ENCODE measurements at regions of chr4 and their contacts with region 1.

Region 1: GRCh38 chr4:103091601-103092223 is 7.9 kb downstream of the BDH2 start:
- DNase-seq: peak; percentile 66
- H3K4me3 ChIP-seq: no peak overlapping the region
- H3K27ac ChIP-seq: no peak overlapping the region
- H3K4me1 ChIP-seq: no peaks in the 10 kb centered on the region
- H3K27me3 ChIP-seq: no peaks in the 10 kb centered on the region
- CTCF ChIP-seq: peak; percentile 49 to 56
- POLR2A ChIP-seq: no peak

Region 2: DNA sequence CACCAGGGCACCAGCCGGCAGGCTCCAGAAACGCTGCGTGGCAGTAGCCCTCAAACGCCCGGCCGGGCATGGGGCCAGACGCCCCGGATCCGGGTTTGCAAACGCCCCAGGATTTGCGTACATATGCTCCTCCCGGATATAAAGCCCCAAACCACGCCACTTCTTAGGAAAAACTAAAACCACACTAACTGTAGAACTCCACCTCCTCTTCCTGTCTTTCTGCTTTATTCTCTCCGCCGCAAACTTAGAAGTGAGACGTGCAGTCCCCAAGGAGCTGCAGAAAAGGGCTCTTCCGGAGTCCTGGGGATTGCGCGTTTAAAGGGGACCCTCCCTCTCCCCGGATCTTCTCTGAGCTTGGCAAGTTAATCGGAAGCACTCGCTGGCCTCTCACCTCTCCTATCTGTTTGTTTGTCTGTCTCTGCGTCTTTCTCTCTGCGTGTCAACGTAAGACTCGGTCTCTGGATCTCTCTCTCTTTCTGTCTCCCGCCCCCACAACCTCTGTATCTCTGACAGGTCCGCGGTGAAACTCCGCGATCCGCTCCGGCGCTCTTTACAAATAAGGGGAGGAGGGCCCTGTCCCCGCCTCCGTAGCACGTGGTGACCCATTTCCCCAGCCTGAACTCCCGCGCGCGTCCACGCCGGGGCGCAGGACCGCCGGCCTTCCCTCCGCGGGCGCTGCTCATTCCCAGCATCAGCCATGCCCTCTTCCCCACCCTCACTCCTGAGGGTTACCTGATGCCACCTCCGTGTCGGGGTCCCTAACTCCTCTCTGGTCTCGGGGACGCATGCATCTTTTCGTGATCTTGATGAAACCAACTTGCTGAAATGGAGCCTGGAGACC is 746.5 kb before region 1 on chr4 and contains the start of gene SLC39A8:
- CTCF ChIA-PET with region 1: no interaction called
- POLR2A ChIA-PET with region 1: no interaction called
- dilution Hi-C with region 1: no loop called
- intact Hi-C with region 1: loop called (anchors 2 kb)
- DNase-seq: peak; percentile 79
- H3K4me3 ChIP-seq: peak within 1 kb of the TSS; percentile 39 to 90 (median 89)
- H3K27ac ChIP-seq: no peak within 1 kb of the TSS
- H3K4me1 ChIP-seq: peaks cover 19% of the 10 kb centered on the region
- H3K27me3 ChIP-seq: peaks cover 2 to 5% of the 10 kb centered on the region in 2 experiments
- CTCF ChIP-seq: peak; percentile 67 to 84
- POLR2A ChIP-seq: peak; percentile 42
- total RNA-seq, gene SLC39A8: 6.0 and 6.7 TPM in 2 replicates

Region 3: GRCh38 chr4:102449751-102450352 is 641.9 kb before region 1 on chr4:
- CTCF ChIA-PET with region 1: interaction called, 6 read pairs
- POLR2A ChIA-PET with region 1: no interaction called
- dilution Hi-C with region 1: no loop called
- intact Hi-C with region 1: loop called (anchors 1 kb)
- DNase-seq: peak; percentile 74
- H3K4me3 ChIP-seq: no peak overlapping the region
- H3K27ac ChIP-seq: no peak overlapping the region
- H3K4me1 ChIP-seq: no peaks in the 10 kb centered on the region
- H3K27me3 ChIP-seq: no peaks in the 10 kb centered on the region
- CTCF ChIP-seq: peak; percentile 40 to 58
- POLR2A ChIP-seq: no peak

Region 4: GRCh38 chr4:102881343-102881742 is 210.4 kb before region 1 on chr4:
- CTCF ChIA-PET with region 1: no interaction called
- POLR2A ChIA-PET with region 1: no interaction called
- dilution Hi-C with region 1: no loop called
- intact Hi-C with region 1: no loop called
- DNase-seq: no peak
- H3K4me3 ChIP-seq: no peak overlapping the region
- H3K27ac ChIP-seq: no peak overlapping the region
- H3K4me1 ChIP-seq: no peaks in the 10 kb centered on the region
- H3K27me3 ChIP-seq: no peaks in the 10 kb centered on the region
- CTCF ChIP-seq: no peak
- POLR2A ChIP-seq: no peak

Region 5: DNA sequence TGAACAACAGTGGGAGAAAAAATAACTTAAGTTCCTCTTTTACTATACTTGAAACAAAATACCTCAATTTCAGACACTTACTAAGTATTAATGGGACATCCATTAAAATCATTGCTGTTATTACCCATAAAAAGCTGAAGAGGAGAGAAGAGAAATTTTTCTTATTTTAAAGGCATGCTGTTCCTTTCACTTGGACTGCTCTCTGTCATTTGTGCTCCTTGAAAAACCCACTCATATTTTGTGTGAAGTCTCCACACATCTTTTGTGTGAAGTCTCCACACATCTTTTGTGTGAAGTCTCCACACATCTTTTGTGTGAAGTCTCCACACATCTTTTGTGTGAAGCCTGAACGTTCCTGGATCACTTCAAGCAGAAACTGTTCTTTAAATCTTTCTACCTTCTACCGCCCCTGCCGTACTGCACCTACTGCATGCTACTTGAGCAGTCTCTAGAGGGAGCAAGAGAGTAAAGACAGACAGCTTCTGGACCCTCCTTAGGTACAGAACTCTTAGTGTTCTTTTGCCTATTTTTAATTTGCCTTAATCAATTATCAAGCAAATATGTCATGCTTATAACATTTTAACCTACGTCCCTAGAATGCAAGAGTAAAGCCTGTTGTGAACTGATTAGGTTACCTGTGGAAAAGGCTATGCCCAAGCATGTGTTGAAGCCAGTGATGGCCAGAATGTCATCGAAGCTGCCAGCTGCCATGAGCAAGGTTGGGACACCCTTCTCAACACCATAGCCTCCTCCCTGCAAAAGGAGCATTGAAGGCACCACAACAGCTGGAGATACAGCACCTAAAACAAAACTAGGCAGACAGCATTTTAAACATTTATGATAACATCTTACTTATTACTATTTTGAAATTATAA is 45.1 kb before region 1 on chr4:
- CTCF ChIA-PET with region 1: interaction called, 4 read pairs
- POLR2A ChIA-PET with region 1: interaction called, 4 read pairs
- dilution Hi-C with region 1: no loop called
- intact Hi-C with region 1: loop called (anchors 5 kb)
- DNase-seq: peak; percentile 44
- H3K4me3 ChIP-seq: no peak overlapping the region
- H3K27ac ChIP-seq: no peak overlapping the region
- H3K4me1 ChIP-seq: no peaks in the 10 kb centered on the region
- H3K27me3 ChIP-seq: no peaks in the 10 kb centered on the region
- CTCF ChIP-seq: peak; percentile 57 to 67
- POLR2A ChIP-seq: no peak

Region 6: GRCh38 chr4:103289186-103289585 is 197.5 kb after region 1 on chr4:
- CTCF ChIA-PET with region 1: no interaction called
- POLR2A ChIA-PET with region 1: no interaction called
- dilution Hi-C with region 1: no loop called
- intact Hi-C with region 1: no loop called
- DNase-seq: no peak
- H3K4me3 ChIP-seq: no peak overlapping the region
- H3K27ac ChIP-seq: no peak overlapping the region
- H3K4me1 ChIP-seq: no peaks in the 10 kb centered on the region
- H3K27me3 ChIP-seq: no peaks in the 10 kb centered on the region
- CTCF ChIP-seq: no peak
- POLR2A ChIP-seq: no peak

Region 7: DNA sequence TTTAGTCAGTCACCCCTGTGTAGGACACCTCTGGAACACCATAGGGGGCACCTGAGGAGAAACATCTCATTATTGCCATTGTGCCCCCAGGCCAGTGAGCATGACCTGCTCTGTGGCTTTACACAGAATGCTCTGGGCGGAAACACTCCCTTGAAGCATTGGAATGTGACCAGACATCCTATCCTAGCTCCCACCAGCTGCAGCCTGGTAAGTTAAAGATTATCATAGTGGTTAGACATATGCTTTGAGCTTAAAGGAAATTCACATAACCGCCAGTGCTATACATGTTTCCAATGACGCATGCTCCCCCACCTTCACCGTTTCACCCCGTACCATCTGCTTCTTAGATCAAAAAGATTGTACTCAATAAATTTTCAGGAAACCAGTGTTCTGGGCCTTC is 324.1 kb after region 1 on chr4:
- CTCF ChIA-PET with region 1: no interaction called
- POLR2A ChIA-PET with region 1: no interaction called
- dilution Hi-C with region 1: no loop called
- intact Hi-C with region 1: no loop called
- DNase-seq: no peak
- H3K4me3 ChIP-seq: no peak overlapping the region
- H3K27ac ChIP-seq: no peak overlapping the region
- H3K4me1 ChIP-seq: no peaks in the 10 kb centered on the region
- H3K27me3 ChIP-seq: no peaks in the 10 kb centered on the region
- CTCF ChIP-seq: no peak
- POLR2A ChIP-seq: no peak

Region 8: GRCh38 chr4:104146048-104146447 is 1054.3 kb after region 1 on chr4:
- CTCF ChIA-PET with region 1: no interaction called
- POLR2A ChIA-PET with region 1: no interaction called
- dilution Hi-C with region 1: no loop called
- intact Hi-C with region 1: no loop called
- DNase-seq: no peak
- H3K4me3 ChIP-seq: no peak overlapping the region
- H3K27ac ChIP-seq: no peak overlapping the region
- H3K4me1 ChIP-seq: no peaks in the 10 kb centered on the region
- H3K27me3 ChIP-seq: no peaks in the 10 kb centered on the region
- CTCF ChIP-seq: no peak
- POLR2A ChIP-seq: no peak